ENCODE measurements at regions of chr3 and their contacts with region 1.

Region 1: DNA sequence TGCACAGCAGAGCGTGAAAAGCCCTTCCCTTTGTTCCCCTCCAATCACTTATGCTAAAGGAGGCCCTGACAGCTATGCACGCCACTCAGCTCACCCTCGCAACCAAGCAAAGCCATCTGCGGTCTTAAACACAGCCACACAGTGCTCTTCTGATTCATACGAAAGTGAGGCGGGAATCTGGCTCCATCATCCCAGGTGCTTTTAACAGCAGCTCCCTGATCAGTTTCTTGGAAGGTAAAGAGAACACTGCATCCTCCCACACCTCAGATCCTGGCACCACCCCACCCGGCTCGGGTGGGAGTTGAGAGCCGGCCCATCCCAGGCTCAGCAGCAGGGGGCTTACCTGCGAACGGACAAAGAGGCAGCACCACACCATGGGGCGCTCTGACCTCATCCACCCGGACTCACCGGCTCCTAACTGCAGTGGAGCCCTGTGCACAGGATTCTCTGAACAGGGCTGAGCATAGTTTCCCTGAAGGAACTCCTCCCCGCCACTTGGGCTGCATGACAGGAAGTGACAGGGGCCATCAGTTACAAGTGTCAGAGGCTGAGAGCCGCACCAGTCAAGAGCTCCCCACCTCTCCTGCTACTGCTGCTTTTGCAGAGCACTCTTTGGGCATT is 114.3 kb upstream of the ARHGEF3 start:
- DNase-seq: peak; percentile 93
- H3K4me3 Mint-ChIP-seq: peak overlapping the region; percentile 89
- H3K27ac Mint-ChIP-seq: peak overlapping the region; percentile 90
- H3K4me1 Mint-ChIP-seq: peaks cover 66% of the 10 kb centered on the region
- H3K27me3 Mint-ChIP-seq: no peaks in the 10 kb centered on the region

Region 2: GRCh38 chr3:56725175-56725574 is 190.9 kb before region 1 on chr3:
- intact Hi-C with region 1: loop called (anchors 1 kb)
- DNase-seq: peak; percentile 92
- H3K4me3 Mint-ChIP-seq: peak overlapping the region; percentile 79
- H3K27ac Mint-ChIP-seq: peak overlapping the region; percentile 79
- H3K4me1 Mint-ChIP-seq: peaks cover 52% of the 10 kb centered on the region
- H3K27me3 Mint-ChIP-seq: no peaks in the 10 kb centered on the region

Region 3: DNA sequence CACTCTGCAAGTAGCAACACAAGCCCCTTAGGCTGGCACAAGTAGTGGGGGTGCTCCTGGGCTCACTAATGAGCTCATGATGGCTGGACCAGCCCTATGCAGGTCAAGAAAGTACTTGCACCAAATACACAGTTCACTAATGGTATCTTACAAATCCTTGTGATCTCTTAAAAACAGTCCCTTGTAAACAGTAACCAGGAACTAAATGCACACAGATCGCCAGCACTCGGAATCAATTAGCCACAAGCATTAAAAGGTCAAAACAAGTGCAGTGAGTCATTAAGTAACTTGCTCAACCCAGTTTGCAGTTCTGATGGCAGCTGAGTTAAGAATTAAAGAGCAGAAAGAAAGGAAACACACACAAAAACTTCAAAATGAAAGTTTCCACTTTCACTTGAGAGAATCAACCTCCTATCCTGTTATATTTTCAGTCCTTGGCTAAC is 157.5 kb before region 1 on chr3:
- intact Hi-C with region 1: loop called (anchors 1 kb)
- DNase-seq: peak; percentile 80
- H3K4me3 Mint-ChIP-seq: peak overlapping the region; percentile 77
- H3K27ac Mint-ChIP-seq: peak overlapping the region; percentile 90
- H3K4me1 Mint-ChIP-seq: peaks cover 75% of the 10 kb centered on the region
- H3K27me3 Mint-ChIP-seq: no peaks in the 10 kb centered on the region

Region 4: GRCh38 chr3:56862352-56863074 is 53.6 kb before region 1 on chr3:
- intact Hi-C with region 1: loop called (anchors 1 kb)
- DNase-seq: no peak
- H3K4me3 Mint-ChIP-seq: peak overlapping the region; percentile 45
- H3K27ac Mint-ChIP-seq: peak overlapping the region; percentile 79
- H3K4me1 Mint-ChIP-seq: peaks cover 59% of the 10 kb centered on the region
- H3K27me3 Mint-ChIP-seq: no peaks in the 10 kb centered on the region

Region 5: GRCh38 chr3:56887402-56888025 is 28.6 kb before region 1 on chr3:
- intact Hi-C with region 1: loop called (anchors 2 kb)
- DNase-seq: peak; percentile 69
- H3K4me3 Mint-ChIP-seq: peak overlapping the region; percentile 55
- H3K27ac Mint-ChIP-seq: peak overlapping the region; percentile 76
- H3K4me1 Mint-ChIP-seq: peaks cover 59% of the 10 kb centered on the region
- H3K27me3 Mint-ChIP-seq: no peaks in the 10 kb centered on the region

Region 6: DNA sequence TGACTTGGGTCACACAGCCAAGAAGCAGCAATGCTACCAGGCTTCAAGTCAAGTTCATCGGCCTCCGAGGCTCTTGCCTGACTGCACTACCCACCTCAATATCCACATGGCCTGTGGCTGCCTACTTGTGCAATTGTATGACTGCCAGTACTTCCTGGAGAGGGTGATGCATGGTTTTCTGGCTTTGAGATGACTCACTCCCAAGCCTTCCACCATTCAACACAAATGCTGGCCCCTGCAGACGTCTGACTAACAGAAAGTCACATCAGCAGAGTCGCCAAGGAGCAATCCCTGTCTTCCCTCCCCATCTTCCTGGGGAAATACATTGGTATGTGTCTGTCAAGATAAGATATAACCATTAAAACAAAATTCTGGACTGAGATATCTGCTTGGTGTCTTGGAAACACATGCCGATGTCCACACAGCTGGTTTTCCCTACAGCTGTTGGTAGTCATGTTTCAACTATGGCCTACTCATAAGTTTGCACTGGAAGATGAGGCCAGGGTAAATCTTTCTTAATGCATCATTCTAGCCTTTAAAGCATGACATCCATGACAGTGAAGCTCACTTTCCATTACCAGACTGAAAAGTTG is 64.8 kb after region 1 on chr3:
- intact Hi-C with region 1: loop called (anchors 1 kb)
- DNase-seq: peak; percentile 74
- H3K4me3 Mint-ChIP-seq: no peak overlapping the region
- H3K27ac Mint-ChIP-seq: peak overlapping the region; percentile 82
- H3K4me1 Mint-ChIP-seq: peaks cover 29% of the 10 kb centered on the region
- H3K27me3 Mint-ChIP-seq: no peaks in the 10 kb centered on the region

Measured in activated CD4-positive, alpha-beta T cell treated with anti-CD3 and anti-CD28 coated beads, Interleukin-2, amount 10 ng/mL, durations not matched to agents 24 days and 14 days (primary cell).